ENCODE measurements at regions of chr7 and their contacts with region 1.

Region 1: DNA sequence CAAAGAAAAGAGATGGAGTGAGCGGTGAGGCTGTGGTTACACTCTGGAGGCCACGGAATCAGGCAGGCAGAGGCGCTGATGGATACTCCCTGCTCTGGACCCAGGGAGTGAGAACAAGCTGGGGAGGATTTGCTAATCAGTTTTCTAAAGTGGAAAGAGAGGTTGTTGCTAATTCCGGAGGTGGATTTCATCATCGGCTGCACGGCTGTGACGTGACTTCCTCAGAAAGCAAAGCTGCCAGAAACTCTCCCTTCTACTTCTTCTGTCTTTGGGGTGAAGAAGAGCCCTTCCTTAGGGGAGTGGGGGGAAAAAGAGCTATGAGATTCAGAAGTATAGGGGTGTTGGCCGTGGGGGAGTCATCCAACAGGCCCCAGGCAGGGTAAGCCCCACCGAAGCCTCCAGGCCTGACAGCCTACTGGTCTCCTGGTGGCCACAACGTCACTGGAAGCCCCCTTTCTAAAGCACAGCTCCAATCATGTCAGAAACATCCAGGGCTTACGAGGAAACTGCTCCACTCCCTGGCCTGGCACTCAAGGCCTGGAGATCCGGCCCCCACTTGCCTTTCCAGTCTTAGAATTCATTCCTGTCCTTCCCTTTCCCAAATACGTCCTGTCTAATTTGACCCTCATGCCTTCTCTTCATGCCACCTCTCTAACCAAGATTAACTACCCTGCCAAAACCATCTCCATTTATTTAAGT is 114.5 kb downstream of the HIP1 start:
- DNase-seq: no peak
- ATAC-seq: 0 out of 2 replicates have a peak, but pooled peaks have one; percentile 10
- H3K4me3 ChIP-seq: no peak overlapping the region
- H3K27ac ChIP-seq: peak overlapping the region; percentile 25; the same call in 1 of the 2 replicates
- H3K4me1 ChIP-seq: no peaks in the 10 kb centered on the region
- H3K27me3 ChIP-seq: no peaks in the 10 kb centered on the region
- CTCF ChIP-seq: no peak

Region 2: GRCh38 chr7:74993121-74993520 is 631.2 kb before region 1 on chr7:
- CTCF ChIA-PET with region 1: no interaction called
- POLR2A ChIA-PET with region 1: no interaction called
- in situ Hi-C with region 1: no loop called
- intact Hi-C with region 1: no loop called
- DNase-seq: no peak
- ATAC-seq: no peak
- H3K4me3 ChIP-seq: no peak overlapping the region
- H3K27ac ChIP-seq: peak overlapping the region; percentile 52; the same call in 1 of the 2 replicates
- H3K4me1 ChIP-seq: peaks cover 24% of the 10 kb centered on the region
- H3K27me3 ChIP-seq: no peaks in the 10 kb centered on the region
- CTCF ChIP-seq: no peak

Region 3: DNA sequence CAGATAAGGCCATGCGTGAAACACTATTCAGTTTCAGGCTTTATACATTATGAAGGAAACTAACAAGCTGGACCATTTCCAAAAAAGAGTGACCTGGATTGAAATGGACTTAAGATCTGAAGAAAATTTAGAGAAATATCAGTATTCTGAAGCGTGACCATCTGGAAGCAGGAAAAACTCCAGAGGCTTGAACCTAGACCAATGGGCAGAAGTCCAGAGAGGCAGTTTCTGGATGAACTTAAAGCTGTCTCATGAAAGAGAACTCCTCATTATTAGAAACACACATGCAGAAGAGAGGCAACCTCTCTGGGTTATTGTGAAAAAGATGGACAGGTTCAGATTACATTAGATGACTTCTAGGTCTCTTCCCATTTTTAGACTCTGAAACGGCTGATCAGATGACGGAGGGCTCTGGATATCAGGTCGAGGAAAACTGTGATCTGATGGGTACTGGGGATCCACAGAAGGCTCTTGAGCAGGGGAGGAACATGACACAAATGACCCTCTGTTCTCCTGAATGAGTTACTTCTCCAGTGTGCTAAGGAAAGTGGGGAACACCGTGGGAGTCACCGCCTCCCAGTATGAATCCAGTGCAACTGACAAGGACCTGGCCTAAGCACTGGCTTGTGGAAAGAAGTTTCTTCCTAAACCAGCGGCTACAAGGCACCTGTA is 15.7 kb before region 1 on chr7:
- CTCF ChIA-PET with region 1: no interaction called
- POLR2A ChIA-PET with region 1: interaction called, 10 read pairs
- in situ Hi-C with region 1: no loop called
- intact Hi-C with region 1: no loop called
- DNase-seq: no peak
- ATAC-seq: no peak
- H3K4me3 ChIP-seq: no peak overlapping the region
- H3K27ac ChIP-seq: no peak overlapping the region
- H3K4me1 ChIP-seq: 0 out of 2 replicates have a peak, but pooled peaks cover 2% of the 10 kb centered on the region
- H3K27me3 ChIP-seq: no peaks in the 10 kb centered on the region
- CTCF ChIP-seq: no peak